Naive thymus-derived CD4-positive, alpha-beta T cell (primary cell): ENCODE measurements at regions of chr10 and their contacts with region 1.

Region 1: DNA sequence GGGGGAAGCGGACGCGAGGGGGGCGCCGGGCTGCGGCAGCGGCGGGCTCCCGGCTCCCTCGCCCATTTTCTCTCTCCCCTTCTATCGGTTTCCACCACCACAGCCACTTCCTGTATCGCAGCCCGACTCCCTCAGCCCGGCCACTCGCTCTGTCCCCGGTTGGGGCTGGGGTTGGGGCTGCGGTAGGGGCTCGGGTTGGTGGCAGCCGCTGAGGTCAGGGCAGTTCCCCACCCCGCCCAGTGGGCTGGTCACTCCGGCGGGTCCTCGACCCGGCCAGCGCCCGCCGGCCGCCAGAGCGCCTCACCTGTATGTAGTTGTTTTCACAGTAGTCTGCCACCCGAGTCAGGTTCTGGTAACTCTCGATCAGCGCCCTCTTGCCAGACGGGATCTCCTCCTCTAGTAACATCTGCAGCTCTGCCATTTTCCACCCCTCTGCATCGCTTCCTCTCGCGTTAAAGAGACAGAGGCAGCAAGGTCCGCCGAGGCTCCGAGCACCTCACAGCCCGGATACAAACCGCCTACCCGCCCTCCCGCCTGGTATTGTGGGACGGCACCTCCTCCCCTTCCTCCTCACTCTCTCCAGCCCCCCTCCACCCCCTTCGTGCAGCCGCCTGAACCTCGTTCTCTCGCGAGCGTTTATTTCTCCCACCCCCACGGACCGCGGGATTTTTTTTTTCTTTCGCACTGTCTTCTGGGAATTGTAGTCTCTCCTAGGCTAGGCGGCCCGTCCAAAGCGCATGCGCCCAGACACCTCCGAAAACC is at the start of gene ABI1:
- DNase-seq: peak; percentile 94 to 100 (median 99)
- ATAC-seq: peak; percentile 94
- H3K4me3 ChIP-seq: peak within 1 kb of the TSS; percentile 80
- H3K4me3 Mint-ChIP-seq: peak within 1 kb of the TSS; percentile 88 to 100 (median 97)
- H3K27ac ChIP-seq: peak within 1 kb of the TSS; percentile 96
- H3K27ac Mint-ChIP-seq: peak within 1 kb of the TSS; percentile 95 to 100 (median 97)
- H3K4me1 ChIP-seq: peaks cover 18 to 22% of the 10 kb centered on the region in 2 donors
- H3K4me1 Mint-ChIP-seq: peaks cover 16 to 45% (median 32%) of the 10 kb centered on the region in 7 donors
- H3K27me3 ChIP-seq: no peaks in the 10 kb centered on the region
- H3K27me3 Mint-ChIP-seq: peaks cover 0 to 26% (median 0%) of the 10 kb centered on the region in 5 donors
- total RNA-seq, gene ABI1: 61.9 to 73.7 (median 65.4) TPM

Region 2: DNA sequence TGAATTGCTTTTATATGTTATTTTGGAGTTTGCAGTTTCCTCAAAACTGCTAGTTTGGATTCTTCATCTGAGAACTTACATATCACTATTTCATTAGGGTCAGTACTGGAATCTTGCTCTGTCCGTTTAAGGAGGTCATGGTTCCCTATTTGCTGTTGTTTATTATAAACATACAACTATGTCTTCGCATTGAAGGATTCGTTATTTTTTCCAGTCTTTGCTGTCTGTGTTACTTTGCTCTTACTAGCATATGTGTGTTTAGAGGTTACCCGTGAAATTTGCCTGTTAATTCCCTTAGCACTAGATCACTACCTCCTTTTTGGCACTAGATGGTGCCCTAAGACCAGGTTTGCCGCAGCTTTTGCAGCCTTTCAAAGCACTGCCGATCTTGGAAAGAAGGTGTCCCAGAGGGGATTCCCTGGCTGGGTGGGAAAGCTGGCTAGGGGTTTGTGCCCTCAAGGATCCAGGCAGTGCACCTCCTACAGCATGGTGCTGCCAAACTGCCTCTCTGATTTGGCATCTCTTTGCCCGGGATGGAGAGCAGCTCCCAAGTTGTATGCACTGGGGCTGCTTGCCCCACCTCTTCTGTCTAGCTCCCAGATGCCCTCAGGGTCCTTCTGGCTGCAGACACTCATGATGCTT is 525.6 kb before region 1 on chr10:
- CTCF ChIA-PET with region 1: no interaction called
- POLR2A ChIA-PET with region 1: no interaction called
- intact Hi-C with region 1: loop called (anchors 1 kb)
- DNase-seq: peak; percentile 46 to 78 (median 70)
- ATAC-seq: peak; percentile 93
- H3K4me3 ChIP-seq: peak overlapping the region; percentile 43
- H3K4me3 Mint-ChIP-seq: peak overlapping the region; percentile 53 to 92 (median 86)
- H3K27ac ChIP-seq: no peak overlapping the region
- H3K27ac Mint-ChIP-seq: peak overlapping the region in 7 of 9 donors; percentile 2 to 83 (median 60)
- H3K4me1 ChIP-seq: no peaks in the 10 kb centered on the region
- H3K4me1 Mint-ChIP-seq: peaks cover 0 to 12% (median 2%) of the 10 kb centered on the region in 7 donors
- H3K27me3 ChIP-seq: no peaks in the 10 kb centered on the region
- H3K27me3 Mint-ChIP-seq: peaks cover 0 to 2% (median 0%) of the 10 kb centered on the region in 5 donors

Region 3: DNA sequence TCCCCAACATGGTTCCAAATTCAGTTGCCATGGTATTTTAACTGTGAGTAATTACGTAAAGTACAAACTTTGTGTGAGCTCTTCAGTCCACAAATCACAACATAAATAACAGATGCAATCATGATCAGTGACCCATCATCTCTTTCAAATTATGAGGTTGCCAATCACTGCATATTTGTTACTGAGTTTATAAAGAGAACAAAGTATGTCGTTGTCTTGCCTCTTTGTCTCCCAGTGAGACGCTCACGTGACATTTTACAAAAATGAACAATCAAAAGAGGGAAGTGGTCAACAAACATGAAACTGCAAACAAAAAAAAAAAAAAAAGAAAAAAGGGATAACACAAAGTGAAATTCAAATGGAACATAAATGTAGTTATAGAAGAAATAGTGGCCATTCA is 285.8 kb before region 1 on chr10:
- CTCF ChIA-PET with region 1: no interaction called
- POLR2A ChIA-PET with region 1: no interaction called
- intact Hi-C with region 1: no loop called
- DNase-seq: no peak
- ATAC-seq: peak; percentile 60
- H3K4me3 ChIP-seq: no peak overlapping the region
- H3K4me3 Mint-ChIP-seq: no peak overlapping the region
- H3K27ac ChIP-seq: no peak overlapping the region
- H3K27ac Mint-ChIP-seq: peak overlapping the region in 1 of 9 donors; percentile 13
- H3K4me1 ChIP-seq: no peaks in the 10 kb centered on the region
- H3K4me1 Mint-ChIP-seq: peaks cover 0 to 8% (median 0%) of the 10 kb centered on the region in 7 donors
- H3K27me3 ChIP-seq: no peaks in the 10 kb centered on the region
- H3K27me3 Mint-ChIP-seq: no peaks in the 10 kb centered on the region

Region 4: GRCh38 chr10:26682931-26683330 is 177.7 kb before region 1 on chr10:
- CTCF ChIA-PET with region 1: no interaction called
- POLR2A ChIA-PET with region 1: no interaction called
- intact Hi-C with region 1: loop called in 1 of 2 experiments (anchors 1 kb)
- DNase-seq: peak in 7 of 9 donors; percentile 65 to 91 (median 85)
- ATAC-seq: peak; percentile 91
- H3K4me3 ChIP-seq: no peak overlapping the region
- H3K4me3 Mint-ChIP-seq: peak overlapping the region in 9 of 10 donors; percentile 26 to 83 (median 71)
- H3K27ac ChIP-seq: peak overlapping the region; percentile 69
- H3K27ac Mint-ChIP-seq: peak overlapping the region in 8 of 9 donors; percentile 94 to 99 (median 97)
- H3K4me1 ChIP-seq: peaks cover 0 to 33% of the 10 kb centered on the region in 2 donors
- H3K4me1 Mint-ChIP-seq: peaks cover 14 to 63% (median 39%) of the 10 kb centered on the region in 7 donors
- H3K27me3 ChIP-seq: no peaks in the 10 kb centered on the region
- H3K27me3 Mint-ChIP-seq: peaks cover 0 to 9% (median 0%) of the 10 kb centered on the region in 5 donors

Region 5: GRCh38 chr10:26746061-26746460 is 114.6 kb before region 1 on chr10:
- CTCF ChIA-PET with region 1: no interaction called
- POLR2A ChIA-PET with region 1: no interaction called
- intact Hi-C with region 1: loop called in 1 of 2 experiments (anchors 5 kb)
- DNase-seq: no peak
- ATAC-seq: no peak
- H3K4me3 ChIP-seq: no peak overlapping the region
- H3K4me3 Mint-ChIP-seq: no peak overlapping the region
- H3K27ac ChIP-seq: no peak overlapping the region
- H3K27ac Mint-ChIP-seq: peak overlapping the region in 7 of 9 donors; percentile 2 to 77 (median 39)
- H3K4me1 ChIP-seq: no peaks in the 10 kb centered on the region
- H3K4me1 Mint-ChIP-seq: peaks cover 0 to 35% (median 0%) of the 10 kb centered on the region in 7 donors
- H3K27me3 ChIP-seq: no peaks in the 10 kb centered on the region
- H3K27me3 Mint-ChIP-seq: no peaks in the 10 kb centered on the region

Region 6: DNA sequence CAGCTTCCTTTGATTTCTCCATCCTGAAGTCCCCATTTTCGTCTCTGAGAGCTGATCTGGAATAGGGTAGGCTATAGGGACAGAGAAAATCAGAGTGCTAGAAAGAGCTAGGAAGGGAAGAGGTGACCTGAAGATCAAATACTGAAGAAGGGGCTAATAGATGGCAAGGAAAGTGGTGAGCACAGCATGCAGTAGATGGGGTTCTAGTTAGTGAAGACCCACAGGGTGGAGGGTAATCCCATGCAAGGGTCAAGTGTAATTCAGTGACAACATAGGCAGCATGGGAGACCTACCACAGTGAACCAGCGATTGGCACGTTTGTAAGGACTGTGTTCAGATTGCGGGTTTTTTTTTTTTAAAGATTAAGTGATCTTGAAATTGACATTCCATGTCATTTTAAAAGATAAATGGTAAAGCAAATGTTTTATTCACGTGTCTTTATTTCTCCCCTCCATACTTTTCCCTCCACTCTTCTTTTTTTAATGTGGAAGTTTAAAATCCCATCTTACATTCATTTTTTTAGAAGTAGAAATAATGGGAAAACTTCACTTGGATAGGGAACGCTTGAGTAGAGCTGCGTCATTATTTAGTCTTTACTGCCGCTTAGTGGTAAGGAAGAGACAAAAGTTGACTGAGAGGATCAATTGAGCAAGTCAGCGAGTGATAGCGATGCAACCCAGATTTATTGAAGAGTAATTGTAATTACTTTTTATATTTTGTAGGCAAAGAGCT is 21.1 kb after region 1 on chr10:
- CTCF ChIA-PET with region 1: interaction called, 15 read pairs
- POLR2A ChIA-PET with region 1: interaction called, 3 read pairs
- intact Hi-C with region 1: loop called (anchors 1 kb)
- DNase-seq: peak in 6 of 9 donors; percentile 23 to 60 (median 37)
- ATAC-seq: peak; percentile 87
- H3K4me3 ChIP-seq: no peak overlapping the region
- H3K4me3 Mint-ChIP-seq: no peak overlapping the region
- H3K27ac ChIP-seq: no peak overlapping the region
- H3K27ac Mint-ChIP-seq: no peak overlapping the region
- H3K4me1 ChIP-seq: no peaks in the 10 kb centered on the region
- H3K4me1 Mint-ChIP-seq: peaks cover 0 to 8% (median 0%) of the 10 kb centered on the region in 7 donors
- H3K27me3 ChIP-seq: no peaks in the 10 kb centered on the region
- H3K27me3 Mint-ChIP-seq: peaks cover 4 to 37% (median 13%) of the 10 kb centered on the region in 5 donors

Region 7: GRCh38 chr10:27241652-27242472 is 381.2 kb after region 1 on chr10:
- CTCF ChIA-PET with region 1: no interaction called
- POLR2A ChIA-PET with region 1: no interaction called
- intact Hi-C with region 1: loop called (anchors 1 kb)
- DNase-seq: peak; percentile 79 to 89 (median 85)
- ATAC-seq: peak; percentile 82
- H3K4me3 ChIP-seq: peak overlapping the region; percentile 80
- H3K4me3 Mint-ChIP-seq: peak overlapping the region; percentile 91 to 99 (median 98)
- H3K27ac ChIP-seq: peak overlapping the region; percentile 93
- H3K27ac Mint-ChIP-seq: peak overlapping the region; percentile 93 to 100 (median 97)
- H3K4me1 ChIP-seq: peaks cover 8 to 21% of the 10 kb centered on the region in 2 donors
- H3K4me1 Mint-ChIP-seq: peaks cover 17 to 35% (median 34%) of the 10 kb centered on the region in 7 donors
- H3K27me3 ChIP-seq: no peaks in the 10 kb centered on the region
- H3K27me3 Mint-ChIP-seq: peaks cover 0 to 5% (median 0%) of the 10 kb centered on the region in 5 donors

Region 8: GRCh38 chr10:27637362-27637964 is 776.8 kb after region 1 on chr10:
- CTCF ChIA-PET with region 1: no interaction called
- POLR2A ChIA-PET with region 1: no interaction called
- intact Hi-C with region 1: no loop called
- DNase-seq: no peak
- ATAC-seq: no peak
- H3K4me3 ChIP-seq: no peak overlapping the region
- H3K4me3 Mint-ChIP-seq: no peak overlapping the region
- H3K27ac ChIP-seq: no peak overlapping the region
- H3K27ac Mint-ChIP-seq: no peak overlapping the region
- H3K4me1 ChIP-seq: no peaks in the 10 kb centered on the region
- H3K4me1 Mint-ChIP-seq: no peaks in the 10 kb centered on the region
- H3K27me3 ChIP-seq: no peaks in the 10 kb centered on the region
- H3K27me3 Mint-ChIP-seq: peaks cover 0 to 13% (median 0%) of the 10 kb centered on the region in 5 donors

Region 9: GRCh38 chr10:28367929-28368484 is 1507.4 kb after region 1 on chr10:
- CTCF ChIA-PET with region 1: no interaction called
- POLR2A ChIA-PET with region 1: no interaction called
- intact Hi-C with region 1: loop called in 1 of 2 experiments (anchors 5 kb)
- DNase-seq: peak in 8 of 9 donors; percentile 54 to 88 (median 83)
- ATAC-seq: peak; percentile 97
- H3K4me3 ChIP-seq: peak overlapping the region; percentile 18
- H3K4me3 Mint-ChIP-seq: peak overlapping the region; percentile 63 to 93 (median 76)
- H3K27ac ChIP-seq: peak overlapping the region; percentile 78
- H3K27ac Mint-ChIP-seq: peak overlapping the region; percentile 90 to 99 (median 96)
- H3K4me1 ChIP-seq: peaks cover 44 to 54% of the 10 kb centered on the region in 2 donors
- H3K4me1 Mint-ChIP-seq: peaks cover 39 to 80% (median 60%) of the 10 kb centered on the region in 7 donors
- H3K27me3 ChIP-seq: no peaks in the 10 kb centered on the region
- H3K27me3 Mint-ChIP-seq: peaks cover 0 to 5% (median 0%) of the 10 kb centered on the region in 5 donors